Ovary (tissue), 10 donors: ENCODE measurements at regions of chr14 and their contacts with region 1.

Region 1: DNA sequence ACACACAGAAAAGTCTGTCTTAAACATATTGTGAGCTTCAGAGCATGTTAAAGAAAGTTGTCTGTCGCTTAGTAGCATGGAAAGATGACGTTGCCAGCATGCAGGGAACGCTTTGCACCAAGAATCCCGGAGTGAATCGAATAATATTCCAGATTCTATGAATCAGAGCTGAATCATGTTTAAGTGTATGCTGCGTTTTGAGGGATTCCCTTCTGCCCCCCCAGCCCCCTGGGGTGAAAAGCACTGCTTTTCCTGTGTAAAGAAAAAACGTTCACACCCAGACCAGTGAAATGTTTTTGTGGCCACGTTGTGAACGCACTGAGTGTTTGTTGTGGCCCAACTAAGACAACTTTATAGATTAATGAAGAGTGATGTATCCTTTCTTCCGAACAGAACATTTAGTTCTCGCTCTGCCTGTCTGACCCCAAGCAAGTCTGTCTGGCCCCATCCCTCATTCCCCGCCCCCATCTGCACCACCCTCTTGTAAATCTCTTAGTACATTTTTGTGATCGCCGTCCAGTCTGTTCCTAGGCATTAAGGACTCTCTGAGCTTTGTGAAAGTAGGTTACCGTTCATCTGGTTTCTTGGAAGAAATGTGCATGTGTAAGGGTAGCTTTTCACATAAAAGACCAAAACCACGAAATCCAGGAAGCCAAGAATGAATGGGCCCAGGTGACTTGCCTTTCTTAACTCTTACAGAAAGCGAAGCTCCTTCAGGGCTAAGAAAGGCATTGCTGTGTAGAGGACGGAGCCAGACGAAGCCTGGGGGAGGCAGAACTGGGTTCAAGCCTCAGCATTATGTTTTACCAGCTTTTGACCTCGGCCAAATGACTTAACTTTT is 103.0 kb downstream of the SAMD4A start:
- DNase-seq: no peak
- H3K4me3 ChIP-seq: no peak overlapping the region
- H3K27ac ChIP-seq: no peak overlapping the region
- H3K4me1 ChIP-seq: no peaks in the 10 kb centered on the region
- H3K27me3 ChIP-seq: no peaks in the 10 kb centered on the region
- CTCF ChIP-seq: no peak
- EP300 ChIP-seq: no peak
- POLR2A ChIP-seq: no peak

Region 2: GRCh38 chr14:54712465-54713200 is 42.7 kb after region 1 on chr14:
- intact Hi-C with region 1: loop called in 1 of 4 experiments (anchors 1 kb)
- DNase-seq: peak in 1 of 5 donors; percentile 39
- H3K4me3 ChIP-seq: no peak overlapping the region
- H3K27ac ChIP-seq: peak overlapping the region in 1 of 2 donors; percentile 65
- H3K4me1 ChIP-seq: peaks cover 10% of the 10 kb centered on the region
- H3K27me3 ChIP-seq: no peaks in the 10 kb centered on the region
- CTCF ChIP-seq: no peak
- EP300 ChIP-seq: peak; percentile 3
- POLR2A ChIP-seq: no peak